Posterior cingulate gyrus (tissue), 11 donors: ENCODE measurements at regions of chr20 and their contacts with region 1.

Region 1: DNA sequence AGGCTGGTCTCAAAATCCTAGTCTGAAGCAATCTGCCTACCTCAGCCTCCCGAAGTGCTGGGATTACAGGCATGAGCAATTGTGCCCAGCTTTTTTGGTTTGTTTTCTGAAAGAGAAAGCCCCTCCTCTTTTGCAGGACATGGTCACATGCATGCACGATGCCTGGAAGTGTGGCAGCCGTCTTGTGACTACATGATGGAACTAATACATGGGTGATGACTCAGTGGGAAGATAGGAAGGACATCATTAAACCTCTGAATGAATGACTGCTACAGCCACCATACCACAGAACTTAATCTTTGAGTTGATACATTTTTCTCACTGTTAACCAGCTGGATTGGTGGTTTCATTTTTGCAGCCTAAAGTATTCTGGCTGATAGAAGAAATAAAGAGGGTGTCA is 13.4 kb upstream of the CTNNBL1 start:
- DNase-seq: no peak

Region 2: DNA sequence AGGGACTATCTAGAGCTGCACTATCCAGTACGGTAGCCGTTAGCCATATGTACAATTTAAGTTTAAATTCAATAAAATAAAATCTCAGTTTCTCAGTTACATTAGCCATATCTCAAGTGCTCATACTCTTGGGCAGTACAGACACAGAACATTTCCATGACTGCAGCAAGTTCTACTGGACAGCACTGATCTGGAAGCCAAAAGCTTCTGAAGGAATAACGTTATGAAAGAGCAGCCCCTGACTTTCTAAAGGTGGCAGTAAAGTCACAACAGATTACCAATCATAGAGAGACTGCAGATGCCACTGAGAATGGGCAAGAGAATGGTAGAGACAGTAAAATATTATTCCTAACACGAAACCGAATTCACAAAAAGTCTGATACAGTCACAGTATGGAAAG is 971.3 kb before region 1 on chr20:
- intact Hi-C with region 1: no loop called
- DNase-seq: no peak

Region 3: GRCh38 chr20:37276494-37277252 is 403.7 kb before region 1 on chr20:
- intact Hi-C with region 1: loop called (anchors 10 kb)
- DNase-seq: peak in 2 of 10 donors; percentile 28 to 80

Region 4: DNA sequence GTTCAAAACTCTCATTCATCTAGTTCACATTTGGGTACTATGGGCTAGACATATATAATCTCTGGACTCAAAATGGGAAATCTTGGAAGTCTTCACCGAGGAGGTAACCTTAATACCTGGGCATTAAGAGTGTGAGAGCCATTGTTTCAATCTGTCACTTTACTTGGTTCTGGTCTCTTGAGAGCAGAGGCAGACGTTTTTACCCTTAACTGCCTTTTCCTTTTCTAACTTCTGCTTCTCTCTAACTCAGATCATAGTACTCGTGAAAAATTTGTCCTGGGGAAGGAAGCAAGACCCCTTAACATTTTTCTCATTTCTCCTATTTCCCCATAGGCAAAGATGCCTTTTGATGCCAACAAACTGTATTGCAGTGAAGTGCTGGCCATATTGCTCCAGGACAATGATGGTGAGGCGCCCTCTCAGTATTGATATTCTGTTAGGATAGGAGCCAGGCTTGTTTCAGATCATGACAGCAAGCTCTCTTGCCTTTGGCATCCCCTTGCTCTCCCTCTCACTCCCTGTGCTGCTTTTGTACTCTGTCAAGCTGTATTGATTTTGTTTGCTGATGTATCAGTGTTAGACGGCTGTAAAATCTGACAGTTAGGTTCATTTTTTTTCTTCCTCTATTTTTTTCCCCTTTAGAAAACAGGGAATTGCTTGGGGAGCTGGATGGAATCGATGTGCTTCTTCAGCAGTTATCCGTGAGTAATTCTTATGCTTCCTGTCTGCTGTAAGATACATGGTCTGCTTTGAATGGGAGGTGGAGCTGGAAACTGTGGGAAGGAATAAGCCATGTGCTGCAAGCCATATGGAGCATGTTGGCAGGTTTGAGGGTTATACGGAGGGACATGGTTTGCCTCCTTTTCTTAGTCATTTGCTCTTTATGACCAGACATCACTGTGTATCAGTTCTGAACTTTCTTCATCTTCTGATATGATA is 96.9 kb after region 1 on chr20:
- intact Hi-C with region 1: no loop called
- DNase-seq: no peak

Region 5: DNA sequence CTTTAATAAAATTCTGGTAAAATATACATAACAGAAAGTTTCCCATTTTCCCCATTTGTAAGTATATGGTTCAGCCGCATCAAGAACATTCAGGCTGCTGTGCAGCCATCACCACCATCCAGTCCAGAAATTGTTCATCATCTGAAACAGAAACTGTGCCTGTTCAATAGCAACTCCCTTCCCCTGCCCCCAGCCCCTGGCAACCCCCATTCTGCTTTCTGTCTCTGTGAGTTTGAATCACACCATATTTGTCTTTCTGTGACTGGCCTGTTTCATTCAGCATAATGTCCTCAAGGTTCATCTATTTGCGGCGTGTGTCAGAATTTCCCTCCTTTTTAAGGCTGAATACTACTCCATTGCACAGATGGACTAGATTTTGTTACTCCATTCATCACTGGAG is 241.6 kb after region 1 on chr20:
- intact Hi-C with region 1: no loop called
- DNase-seq: no peak